PC-3 (cell line): ENCODE measurements at regions of chr3 and their contacts with region 1.

Region 1: GRCh38 chr3:17431004-17431403 is 311.4 kb downstream of the TBC1D5 start:
- DNase-seq: peak; percentile 68
- ATAC-seq: peak; percentile 81
- H3K4me3 ChIP-seq: no peak overlapping the region
- H3K27ac ChIP-seq: no peak overlapping the region
- H3K4me1 ChIP-seq: peaks cover 12% of the 10 kb centered on the region
- H3K27me3 ChIP-seq: no peaks in the 10 kb centered on the region
- CTCF ChIP-seq: peak; percentile 62

Region 2: DNA sequence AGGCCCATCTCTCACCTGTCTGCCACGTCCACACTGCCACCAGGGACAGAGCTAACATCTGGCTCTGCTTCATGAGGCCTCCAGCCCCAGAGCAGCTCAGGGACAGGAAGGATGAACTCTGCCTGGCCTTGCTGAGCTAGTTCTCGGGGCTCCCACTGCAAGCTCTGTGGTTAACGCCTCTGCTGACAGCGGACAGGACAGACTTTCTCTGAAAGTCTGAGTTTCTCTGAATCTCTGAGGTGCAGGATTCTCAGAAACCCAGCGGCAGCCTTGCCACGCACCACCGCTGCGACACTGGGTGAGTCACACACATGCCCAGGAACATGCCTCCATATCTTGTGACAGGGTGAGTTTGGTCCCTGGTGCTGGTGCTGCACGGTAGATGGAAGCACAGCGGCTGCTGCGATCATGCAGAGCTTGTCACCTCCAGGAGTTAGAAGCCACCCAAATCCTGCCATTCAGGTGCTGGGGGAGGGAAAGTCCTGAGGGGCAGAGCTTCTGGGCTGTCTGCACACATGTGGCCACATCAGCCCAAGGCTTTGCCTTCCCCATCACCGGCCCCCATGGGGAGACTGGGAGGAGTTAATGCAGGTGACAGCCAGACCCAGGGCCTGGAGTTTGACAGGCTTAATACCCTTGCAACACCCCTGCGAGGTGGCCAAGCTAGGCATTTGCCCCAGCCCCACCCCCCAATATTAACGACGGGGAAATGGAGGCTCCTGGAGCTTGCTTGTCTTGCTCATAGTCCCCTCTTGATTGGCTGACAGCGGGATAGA is 279.2 kb before region 1 on chr3:
- CTCF ChIA-PET with region 1: no interaction called
- POLR2A ChIA-PET with region 1: no interaction called
- intact Hi-C with region 1: no loop called
- DNase-seq: no peak
- ATAC-seq: no peak; the same call in 1 of the 2 replicates
- H3K4me3 ChIP-seq: no peak overlapping the region
- H3K27ac ChIP-seq: no peak overlapping the region
- H3K4me1 ChIP-seq: no peaks in the 10 kb centered on the region
- H3K27me3 ChIP-seq: no peaks in the 10 kb centered on the region
- CTCF ChIP-seq: no peak

Region 3: DNA sequence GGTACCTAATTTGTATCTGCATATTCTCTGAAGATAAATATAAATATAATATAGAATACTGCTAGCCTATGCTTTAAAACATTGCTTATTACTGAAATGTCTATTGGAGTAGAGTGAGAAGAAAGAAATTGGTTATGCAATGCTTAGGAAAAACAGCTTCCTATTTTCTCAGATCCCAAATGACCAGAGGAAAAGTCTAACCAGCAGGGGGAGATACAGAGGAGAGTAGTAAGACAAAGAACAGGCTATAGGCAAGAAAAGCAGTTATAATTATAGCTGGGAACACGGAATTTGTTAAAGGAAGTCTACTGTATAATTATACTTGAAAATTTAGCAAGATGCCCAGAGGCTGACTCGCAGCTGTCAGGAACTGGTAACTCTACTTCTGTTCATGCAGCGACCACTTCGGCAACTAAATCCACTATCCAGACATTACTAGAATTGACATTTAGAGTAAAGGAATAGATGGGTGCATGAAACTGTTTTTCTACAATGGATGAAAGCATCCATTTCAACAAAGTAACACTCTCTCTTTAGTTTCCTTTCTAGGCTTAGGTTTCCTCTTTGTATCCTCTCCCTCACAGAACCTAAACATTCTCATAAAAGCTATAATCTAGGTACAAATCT is 214.2 kb after region 1 on chr3:
- CTCF ChIA-PET with region 1: no interaction called
- POLR2A ChIA-PET with region 1: no interaction called
- intact Hi-C with region 1: loop called (anchors 2 kb)
- DNase-seq: peak; percentile 85
- ATAC-seq: peak; percentile 89
- H3K4me3 ChIP-seq: no peak overlapping the region
- H3K27ac ChIP-seq: no peak overlapping the region
- H3K4me1 ChIP-seq: peaks cover 4% of the 10 kb centered on the region; the same call in 1 of the 2 replicates
- H3K27me3 ChIP-seq: no peaks in the 10 kb centered on the region
- CTCF ChIP-seq: peak; percentile 85

Region 4: DNA sequence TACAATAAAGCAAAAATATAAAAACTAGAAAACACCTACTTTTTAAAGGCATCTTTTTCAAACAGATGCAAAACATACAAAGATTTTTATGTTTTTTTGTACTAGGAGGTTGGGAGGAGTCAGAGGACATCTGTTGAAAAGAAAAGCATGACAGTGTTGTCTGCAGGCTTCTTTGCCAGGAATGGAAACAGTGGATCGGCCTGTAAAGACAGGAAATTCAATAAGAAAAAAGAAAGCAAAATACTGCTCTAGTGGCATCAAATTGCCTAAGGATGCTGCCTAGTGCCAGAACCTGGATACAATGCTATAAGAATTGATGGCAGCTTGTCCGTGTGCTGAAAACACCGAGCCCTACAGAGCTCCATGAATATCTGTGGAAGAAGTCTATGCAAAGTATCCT is 241.5 kb after region 1 on chr3:
- CTCF ChIA-PET with region 1: no interaction called
- POLR2A ChIA-PET with region 1: no interaction called
- intact Hi-C with region 1: no loop called
- DNase-seq: no peak
- ATAC-seq: no peak
- H3K4me3 ChIP-seq: no peak overlapping the region
- H3K27ac ChIP-seq: no peak overlapping the region
- H3K4me1 ChIP-seq: no peaks in the 10 kb centered on the region
- H3K27me3 ChIP-seq: no peaks in the 10 kb centered on the region
- CTCF ChIP-seq: no peak

Region 5: DNA sequence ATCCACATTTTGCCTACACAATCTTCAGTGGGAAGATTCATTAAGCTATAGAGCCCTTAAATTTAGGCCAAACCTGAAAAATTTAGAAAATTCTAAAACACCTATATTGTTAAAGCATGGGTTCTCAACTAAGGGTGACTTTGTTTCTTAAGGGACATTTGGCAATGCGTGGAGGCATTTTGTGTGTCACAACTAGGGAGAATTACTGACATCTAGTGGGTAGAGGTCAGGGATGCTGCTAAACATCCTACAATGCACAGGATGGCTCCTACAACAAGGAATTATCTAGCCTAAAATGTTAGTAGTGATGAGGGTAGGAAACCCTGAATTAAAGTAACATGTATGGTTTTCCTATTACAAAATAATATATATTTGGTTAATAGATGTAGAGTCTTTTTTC is 255.6 kb after region 1 on chr3:
- CTCF ChIA-PET with region 1: no interaction called
- POLR2A ChIA-PET with region 1: no interaction called
- intact Hi-C with region 1: loop called (anchors 1 kb)
- DNase-seq: peak; percentile 46
- ATAC-seq: peak; percentile 71
- H3K4me3 ChIP-seq: no peak overlapping the region
- H3K27ac ChIP-seq: no peak overlapping the region
- H3K4me1 ChIP-seq: no peaks in the 10 kb centered on the region
- H3K27me3 ChIP-seq: no peaks in the 10 kb centered on the region
- CTCF ChIP-seq: peak; percentile 59